PC-3 (cell line): ENCODE measurements at regions of chr6 and their contacts with region 1.

Region 1: GRCh38 chr6:102936959-102937358 is 1543.5 kb downstream of the GRIK2 start:
- DNase-seq: peak; percentile 12
- ATAC-seq: peak; percentile 82
- H3K4me3 ChIP-seq: no peak overlapping the region
- H3K27ac ChIP-seq: no peak overlapping the region
- H3K4me1 ChIP-seq: no peaks in the 10 kb centered on the region
- H3K27me3 ChIP-seq: no peaks in the 10 kb centered on the region
- CTCF ChIP-seq: no peak

Region 2: GRCh38 chr6:103002282-103002681 is 65.3 kb after region 1 on chr6:
- CTCF ChIA-PET with region 1: no interaction called
- POLR2A ChIA-PET with region 1: no interaction called
- intact Hi-C with region 1: loop called (anchors 5 kb)
- DNase-seq: peak; percentile 2
- ATAC-seq: peak; percentile 21; the same call in 1 of the 2 replicates
- H3K4me3 ChIP-seq: no peak overlapping the region
- H3K27ac ChIP-seq: no peak overlapping the region
- H3K4me1 ChIP-seq: peaks cover 12% of the 10 kb centered on the region; the same call in 1 of the 2 replicates
- H3K27me3 ChIP-seq: no peaks in the 10 kb centered on the region
- CTCF ChIP-seq: no peak

Region 3: GRCh38 chr6:103273048-103273447 is 336.1 kb after region 1 on chr6:
- CTCF ChIA-PET with region 1: no interaction called
- POLR2A ChIA-PET with region 1: no interaction called
- intact Hi-C with region 1: no loop called
- DNase-seq: peak; percentile 52
- ATAC-seq: peak; percentile 69
- H3K4me3 ChIP-seq: no peak overlapping the region
- H3K27ac ChIP-seq: no peak overlapping the region
- H3K4me1 ChIP-seq: no peaks in the 10 kb centered on the region
- H3K27me3 ChIP-seq: no peaks in the 10 kb centered on the region
- CTCF ChIP-seq: peak; percentile 56